ENCODE measurements at regions of chr11 and their contacts with region 1.

Region 1: GRCh38 chr11:35237860-35238715 is 99.1 kb downstream of the CD44 start:
- DNase-seq: no peak
- ATAC-seq: peak; percentile 52

Region 2: GRCh38 chr11:34926101-34926830 is 311.8 kb before region 1 on chr11:
- intact Hi-C with region 1: loop called (anchors 5 kb)
- DNase-seq: no peak
- ATAC-seq: peak; percentile 72

Region 3: DNA sequence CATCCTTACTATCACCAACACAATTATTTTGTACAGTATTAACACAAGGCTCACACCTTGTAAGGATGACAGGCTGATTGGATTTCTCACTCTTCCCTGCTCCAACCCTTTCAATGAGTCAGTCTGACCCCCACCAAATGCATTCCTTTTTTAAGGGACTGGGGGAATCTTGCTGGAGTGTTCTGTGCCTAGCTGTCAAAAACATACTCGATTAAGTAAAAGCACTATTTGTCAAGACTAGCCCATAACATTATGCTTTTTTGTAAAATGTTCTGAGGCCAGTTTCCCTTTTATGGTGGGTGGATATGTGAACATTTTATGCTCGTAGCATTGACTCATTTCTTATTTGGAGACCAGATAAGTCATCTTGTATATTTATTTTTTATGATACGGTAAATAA is 234.4 kb before region 1 on chr11:
- intact Hi-C with region 1: loop called (anchors 5 kb)
- DNase-seq: no peak
- ATAC-seq: no peak

Region 4: GRCh38 chr11:35337136-35337918 is 99.2 kb after region 1 on chr11:
- intact Hi-C with region 1: no loop called
- DNase-seq: no peak
- ATAC-seq: no peak

Measured in Right ventricle myocardium superior (tissue), 1 donor.